Prostate gland (tissue), 2 donors: ENCODE measurements at regions of chr1 and their contacts with region 1.

Region 1: GRCh38 chr1:156838981-156839410 is 19.9 kb downstream of the INSRR start:
- DNase-seq: no peak
- H3K4me3 ChIP-seq: no peak overlapping the region
- H3K27ac ChIP-seq: no peak overlapping the region
- H3K4me1 ChIP-seq: no peaks in the 10 kb centered on the region
- H3K27me3 ChIP-seq: peaks cover 3% of the 10 kb centered on the region
- CTCF ChIP-seq: peak; percentile 56 to 73 (median 66)
- POLR2A ChIP-seq: no peak

Region 2: GRCh38 chr1:156889802-156890585 is 51.0 kb after region 1 on chr1:
- intact Hi-C with region 1: loop called (anchors 5 kb)
- DNase-seq: peak; percentile 62
- H3K4me3 ChIP-seq: no peak overlapping the region
- H3K27ac ChIP-seq: no peak overlapping the region
- H3K4me1 ChIP-seq: peaks cover 3% of the 10 kb centered on the region
- H3K27me3 ChIP-seq: peaks cover 2% of the 10 kb centered on the region
- CTCF ChIP-seq: peak; percentile 31 to 78 (median 70)
- POLR2A ChIP-seq: no peak